Dendritic cell treated with granulocyte-macrophage colony-stimulating factor and Interleukin-4, amounts not matched to agents 40 ng/mL and 50 ng/mL, for 4 days (primary cell): ENCODE measurements at regions of chr2 and their contacts with region 1.

Region 1: GRCh38 chr2:40488101-40488601 is 36.3 kb upstream of the SLC8A1 start:
- H3K4me3 Mint-ChIP-seq: no peak overlapping the region
- H3K27ac Mint-ChIP-seq: peak overlapping the region; percentile 79
- H3K4me1 Mint-ChIP-seq: peaks cover 55% of the 10 kb centered on the region
- H3K27me3 Mint-ChIP-seq: no peaks in the 10 kb centered on the region

Region 2: GRCh38 chr2:40455661-40456060 is 32.5 kb before region 1 on chr2:
- intact Hi-C with region 1: loop called (anchors 2 kb)
- H3K4me3 Mint-ChIP-seq: peak overlapping the region; percentile 58
- H3K27ac Mint-ChIP-seq: peak overlapping the region; percentile 92
- H3K4me1 Mint-ChIP-seq: peaks cover 50% of the 10 kb centered on the region
- H3K27me3 Mint-ChIP-seq: no peaks in the 10 kb centered on the region